Dendritic cell treated with granulocyte-macrophage colony-stimulating factor and Interleukin-4, amounts not matched to agents 40 ng/mL and 50 ng/mL, for 4 days (primary cell): ENCODE measurements at regions of chr1 and their contacts with region 1.

Region 1: DNA sequence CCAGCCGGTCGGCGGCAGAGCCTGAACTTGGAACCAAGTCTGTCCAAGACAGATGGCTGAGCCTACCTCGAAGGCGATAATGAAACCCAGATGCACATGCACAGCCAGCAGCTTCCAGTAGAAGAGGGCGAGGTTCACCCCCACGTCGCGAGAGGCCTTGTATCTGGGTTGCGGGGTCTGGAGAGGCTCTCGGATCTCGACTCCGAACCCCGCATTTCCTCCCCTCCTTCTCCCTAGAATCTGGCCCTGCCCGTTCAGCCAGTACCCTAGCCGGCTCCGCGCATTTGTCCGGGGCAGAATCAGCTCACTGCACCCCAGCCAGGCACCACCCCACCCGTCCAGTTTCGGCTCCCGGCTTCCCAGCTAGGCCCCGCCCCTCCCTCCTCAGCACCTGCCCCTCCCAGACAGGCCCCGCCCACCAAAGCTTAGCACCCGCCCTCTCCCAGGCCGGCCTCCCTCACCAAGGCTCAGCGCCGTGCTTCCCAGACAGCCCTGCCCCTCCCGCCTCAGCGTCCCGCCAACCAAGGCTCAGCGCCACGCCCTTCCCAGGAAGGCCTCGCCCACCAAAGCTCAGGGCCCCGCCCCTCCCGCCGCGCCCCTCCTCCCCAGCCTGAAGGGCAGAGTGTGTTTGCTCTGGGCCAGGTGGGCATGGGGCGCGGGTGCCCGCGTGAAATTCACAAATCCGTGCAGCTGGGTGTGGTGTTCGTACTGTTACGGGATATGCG is 4.8 kb upstream of the ARHGEF19 start:
- H3K4me3 Mint-ChIP-seq: peak overlapping the region; percentile 85
- H3K27ac Mint-ChIP-seq: peak overlapping the region; percentile 83
- H3K4me1 Mint-ChIP-seq: peaks cover 32% of the 10 kb centered on the region
- H3K27me3 Mint-ChIP-seq: peaks cover 27% of the 10 kb centered on the region

Region 2: GRCh38 chr1:16032388-16033103 is 184.7 kb before region 1 on chr1:
- intact Hi-C with region 1: no loop called
- H3K4me3 Mint-ChIP-seq: no peak overlapping the region
- H3K27ac Mint-ChIP-seq: no peak overlapping the region
- H3K4me1 Mint-ChIP-seq: peaks cover 5% of the 10 kb centered on the region
- H3K27me3 Mint-ChIP-seq: peaks cover 37% of the 10 kb centered on the region

Region 3: DNA sequence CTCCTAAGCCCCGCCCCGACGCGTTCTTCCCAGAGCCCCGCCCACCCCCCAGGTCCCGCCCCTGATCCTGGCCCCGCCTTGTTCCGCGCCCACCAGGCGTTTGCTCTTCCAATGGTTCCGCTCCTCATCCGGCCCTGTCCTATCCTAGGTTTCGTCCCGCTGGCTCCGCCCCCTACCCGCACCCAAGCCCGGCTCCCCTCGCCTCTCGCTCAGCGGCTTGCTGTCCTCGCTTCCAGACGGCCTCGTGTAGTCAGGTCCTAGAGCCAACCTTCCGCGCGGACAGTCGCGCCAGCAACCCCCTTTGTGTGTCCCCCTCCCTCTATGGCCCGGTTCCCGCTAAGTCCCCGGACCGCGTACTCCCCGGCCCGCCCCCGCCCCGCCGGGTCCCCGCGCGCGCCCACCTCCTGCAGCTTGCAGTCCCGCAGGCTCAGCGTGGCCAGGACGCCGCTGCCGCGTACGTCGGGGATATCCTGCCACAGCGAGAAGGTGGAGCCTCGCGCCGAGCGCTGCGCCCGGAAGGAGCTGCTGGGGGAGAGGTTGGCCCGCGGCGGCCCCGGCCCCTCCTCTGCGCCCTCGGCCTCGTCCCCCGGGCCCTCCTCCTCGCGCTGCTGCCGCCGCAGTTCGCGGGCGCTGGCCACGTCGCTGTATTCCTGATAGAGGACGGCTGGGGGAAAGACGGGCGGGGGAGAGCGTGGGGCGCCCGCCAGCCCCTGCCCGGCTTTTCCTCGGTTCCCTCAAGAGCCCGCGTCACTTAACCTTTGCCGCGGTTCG is 10.5 kb before region 1 on chr1:
- intact Hi-C with region 1: loop called (anchors 1 kb)
- H3K4me3 Mint-ChIP-seq: peak overlapping the region; percentile 94
- H3K27ac Mint-ChIP-seq: peak overlapping the region; percentile 93
- H3K4me1 Mint-ChIP-seq: peaks cover 15% of the 10 kb centered on the region
- H3K27me3 Mint-ChIP-seq: peaks cover 3% of the 10 kb centered on the region

Region 4: GRCh38 chr1:16236511-16237342 is 19.5 kb after region 1 on chr1 and contains the start of gene CPLANE2:
- intact Hi-C with region 1: loop called (anchors 1 kb)
- H3K4me3 Mint-ChIP-seq: peak within 1 kb of the TSS; percentile 79
- H3K27ac Mint-ChIP-seq: peak within 1 kb of the TSS; percentile 88
- H3K4me1 Mint-ChIP-seq: peaks cover 20% of the 10 kb centered on the region
- H3K27me3 Mint-ChIP-seq: no peaks in the 10 kb centered on the region